ENCODE measurements at regions of chr2 and their contacts with region 1.

Region 1: GRCh38 chr2:63066838-63067237 is 16.2 kb downstream of the OTX1 start:
- DNase-seq: no peak
- ATAC-seq: no peak
- H3K4me3 ChIP-seq: no peak overlapping the region
- H3K27ac ChIP-seq: no peak overlapping the region
- H3K4me1 ChIP-seq: no peaks in the 10 kb centered on the region
- H3K27me3 ChIP-seq: peaks cover 27% of the 10 kb centered on the region
- CTCF ChIP-seq: no peak
- POLR2A ChIP-seq: no peak
- RAD21 ChIP-seq: no peak

Region 2: GRCh38 chr2:62297624-62298010 is 769.2 kb before region 1 on chr2:
- CTCF ChIA-PET with region 1: interaction called, 11 read pairs
- POLR2A ChIA-PET with region 1: no interaction called
- dilution Hi-C with region 1: no loop called
- in situ Hi-C with region 1: no loop called
- intact Hi-C with region 1: no loop called
- DNase-seq: no peak
- ATAC-seq: peak; percentile 32; the same call in 1 of the 2 replicates
- H3K4me3 ChIP-seq: no peak overlapping the region
- H3K27ac ChIP-seq: no peak overlapping the region
- H3K4me1 ChIP-seq: 0 out of 2 replicates have a peak, but pooled peaks cover 2% of the 10 kb centered on the region
- H3K27me3 ChIP-seq: peaks cover 9% of the 10 kb centered on the region
- CTCF ChIP-seq: peak; percentile 28; the same call in 1 of the 2 replicates
- POLR2A ChIP-seq: no peak
- RAD21 ChIP-seq: peak; percentile 38; the same call in 1 of the 2 replicates